WTC11 (cell line): ENCODE measurements at regions of chr1 and their contacts with region 1.

Region 1: GRCh38 chr1:175757381-175758015 is 14.1 kb upstream of the TNR start:
- DNase-seq: peak; percentile 80
- ATAC-seq: peak; percentile 100
- H3K4me3 Mint-ChIP-seq: no peak overlapping the region
- H3K27ac Mint-ChIP-seq: no peak overlapping the region
- H3K4me1 Mint-ChIP-seq: peaks cover 13% of the 10 kb centered on the region
- H3K27me3 Mint-ChIP-seq: peaks cover 12% of the 10 kb centered on the region
- CTCF ChIP-seq: peak; percentile 91

Region 2: GRCh38 chr1:175373786-175374623 is 383.5 kb before region 1 on chr1:
- CTCF ChIA-PET with region 1: interaction called, 10 read pairs
- POLR2A ChIA-PET with region 1: no interaction called
- DNase-seq: peak; percentile 75
- ATAC-seq: peak; percentile 94
- H3K4me3 Mint-ChIP-seq: no peak overlapping the region
- H3K27ac Mint-ChIP-seq: no peak overlapping the region
- H3K4me1 Mint-ChIP-seq: peaks cover 6% of the 10 kb centered on the region
- H3K27me3 Mint-ChIP-seq: peaks cover 7% of the 10 kb centered on the region; the same call in 1 of the 2 replicates
- CTCF ChIP-seq: peak; percentile 82

Region 3: GRCh38 chr1:175646453-175647209 is 110.9 kb before region 1 on chr1:
- CTCF ChIA-PET with region 1: interaction called, 10 read pairs
- POLR2A ChIA-PET with region 1: no interaction called
- DNase-seq: no peak
- ATAC-seq: peak; percentile 63
- H3K4me3 Mint-ChIP-seq: no peak overlapping the region
- H3K27ac Mint-ChIP-seq: no peak overlapping the region
- H3K4me1 Mint-ChIP-seq: peaks cover 8% of the 10 kb centered on the region
- H3K27me3 Mint-ChIP-seq: no peaks in the 10 kb centered on the region; the same call in 1 of the 2 replicates
- CTCF ChIP-seq: no peak

Region 4: GRCh38 chr1:175689396-175689795 is 68.1 kb before region 1 on chr1:
- CTCF ChIA-PET with region 1: no interaction called
- POLR2A ChIA-PET with region 1: no interaction called
- DNase-seq: no peak
- ATAC-seq: no peak
- H3K4me3 Mint-ChIP-seq: no peak overlapping the region
- H3K27ac Mint-ChIP-seq: no peak overlapping the region
- H3K4me1 Mint-ChIP-seq: no peaks in the 10 kb centered on the region
- H3K27me3 Mint-ChIP-seq: no peaks in the 10 kb centered on the region; the same call in 1 of the 2 replicates
- CTCF ChIP-seq: no peak

Region 5: GRCh38 chr1:175742790-175743459 is 14.6 kb before region 1 on chr1:
- CTCF ChIA-PET with region 1: interaction called, 35 read pairs
- POLR2A ChIA-PET with region 1: no interaction called
- DNase-seq: peak; percentile 59
- ATAC-seq: peak; percentile 89
- H3K4me3 Mint-ChIP-seq: peak overlapping the region; percentile 59
- H3K27ac Mint-ChIP-seq: no peak overlapping the region
- H3K4me1 Mint-ChIP-seq: peaks cover 14% of the 10 kb centered on the region
- H3K27me3 Mint-ChIP-seq: peaks cover 33% of the 10 kb centered on the region
- CTCF ChIP-seq: no peak

Region 6: GRCh38 chr1:175768610-175769009 is 11.1 kb after region 1 on chr1:
- CTCF ChIA-PET with region 1: interaction called, 22 read pairs
- POLR2A ChIA-PET with region 1: no interaction called
- DNase-seq: no peak
- ATAC-seq: no peak
- H3K4me3 Mint-ChIP-seq: no peak overlapping the region
- H3K27ac Mint-ChIP-seq: no peak overlapping the region
- H3K4me1 Mint-ChIP-seq: no peaks in the 10 kb centered on the region
- H3K27me3 Mint-ChIP-seq: peaks cover 19% of the 10 kb centered on the region
- CTCF ChIP-seq: no peak

Region 7: GRCh38 chr1:175818929-175819328 is 61.4 kb after region 1 on chr1:
- CTCF ChIA-PET with region 1: interaction called, 12 read pairs
- POLR2A ChIA-PET with region 1: no interaction called
- DNase-seq: no peak
- ATAC-seq: peak; percentile 51
- H3K4me3 Mint-ChIP-seq: no peak overlapping the region
- H3K27ac Mint-ChIP-seq: no peak overlapping the region; the same call in 1 of the 2 replicates
- H3K4me1 Mint-ChIP-seq: peaks cover 12% of the 10 kb centered on the region
- H3K27me3 Mint-ChIP-seq: no peaks in the 10 kb centered on the region
- CTCF ChIP-seq: no peak

Region 8: DNA sequence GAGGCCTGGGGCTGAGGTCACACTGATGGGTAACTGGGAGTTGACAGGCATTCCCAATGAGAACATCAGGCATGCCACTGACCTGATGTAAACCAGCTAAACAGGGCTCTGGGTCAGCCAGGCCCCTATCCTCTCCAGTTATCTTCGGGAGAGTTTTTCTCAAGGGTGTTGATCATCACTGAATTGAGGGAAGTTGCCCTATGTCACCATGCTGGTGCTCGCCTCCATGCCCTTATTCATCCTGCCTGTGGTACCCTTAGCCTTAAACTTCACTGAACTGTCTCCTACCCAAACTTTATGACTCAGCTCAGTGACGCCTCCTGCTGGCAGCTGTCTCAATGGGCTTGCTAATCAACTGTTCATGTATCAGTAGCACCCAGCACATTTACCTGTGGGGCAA is 66.6 kb after region 1 on chr1:
- CTCF ChIA-PET with region 1: interaction called, 12 read pairs
- POLR2A ChIA-PET with region 1: no interaction called
- DNase-seq: peak; percentile 88
- ATAC-seq: peak; percentile 97
- H3K4me3 Mint-ChIP-seq: no peak overlapping the region
- H3K27ac Mint-ChIP-seq: no peak overlapping the region
- H3K4me1 Mint-ChIP-seq: peaks cover 5% of the 10 kb centered on the region
- H3K27me3 Mint-ChIP-seq: no peaks in the 10 kb centered on the region; the same call in 1 of the 2 replicates
- CTCF ChIP-seq: peak; percentile 65; the same call in 1 of the 2 replicates